IMR-90 (cell line): ENCODE measurements at regions of chr17 and their contacts with region 1.

Region 1: DNA sequence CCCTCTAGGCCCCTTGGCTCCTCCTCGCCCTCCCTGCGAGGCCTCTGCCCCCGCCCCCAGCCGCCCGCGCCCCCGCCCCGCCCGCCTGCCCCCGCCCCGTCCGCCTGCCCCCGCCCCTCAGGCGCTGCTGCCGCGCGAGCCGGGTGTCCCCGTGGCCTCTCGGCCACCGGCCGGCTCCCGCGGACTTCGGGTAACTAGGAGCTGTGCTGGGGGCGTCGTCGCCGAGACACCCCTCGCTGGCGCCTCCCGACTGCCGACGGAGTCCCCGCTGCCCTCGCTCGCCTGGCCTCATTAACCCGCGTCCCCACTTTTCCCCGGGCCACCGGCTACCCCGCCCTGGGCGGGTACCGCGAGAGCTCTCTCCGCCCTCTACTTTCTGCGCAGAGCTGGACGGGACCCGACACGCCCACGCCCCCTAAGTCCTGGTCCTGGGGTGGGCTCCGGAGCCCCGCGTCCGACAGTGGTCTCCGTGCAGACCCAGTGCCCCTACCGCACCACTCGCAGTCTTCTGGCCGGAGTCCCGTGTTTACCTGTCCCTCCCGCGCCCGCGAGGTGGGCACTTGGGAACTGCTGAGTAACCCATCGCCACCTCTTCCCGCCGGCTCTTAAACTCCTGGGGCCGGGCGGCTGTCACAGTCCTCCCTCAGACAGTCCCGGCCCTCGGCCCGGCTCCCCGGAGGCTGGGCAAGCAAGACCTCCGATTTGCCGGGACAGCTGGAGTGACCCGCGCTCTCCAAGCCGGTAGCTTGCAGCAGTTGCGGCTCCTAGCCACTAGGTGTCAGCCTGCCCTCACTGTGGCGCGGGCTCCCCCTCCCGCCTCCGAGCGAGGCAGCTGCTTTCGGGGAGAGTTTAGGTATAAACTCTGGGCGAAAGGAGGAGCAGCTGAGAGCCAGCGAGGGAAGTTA is at the start of gene TLCD1:
- DNase-seq: peak; percentile 90
- ATAC-seq: peak; percentile 63
- H3K4me3 ChIP-seq: peak within 1 kb of the TSS; percentile 72
- H3K27ac ChIP-seq: peak within 1 kb of the TSS; percentile 74
- H3K4me1 ChIP-seq: peaks cover 12% of the 10 kb centered on the region
- H3K27me3 ChIP-seq: no peaks in the 10 kb centered on the region
- CTCF ChIP-seq: peak; percentile 99
- POLR2A ChIP-seq: peak; percentile 62
- RAD21 ChIP-seq: peak; percentile 100
- total RNA-seq, gene TLCD1: 3.6 and 3.9 TPM in 2 replicates

Region 2: GRCh38 chr17:28371245-28372202 is 355.0 kb before region 1 on chr17 and contains the start of gene SARM1:
- CTCF ChIA-PET with region 1: no interaction called
- POLR2A ChIA-PET with region 1: no interaction called
- dilution Hi-C with region 1: no loop called
- in situ Hi-C with region 1: no loop called
- intact Hi-C with region 1: no loop called
- DNase-seq: peak; percentile 85
- ATAC-seq: peak; percentile 83
- H3K4me3 ChIP-seq: peak within 1 kb of the TSS; percentile 54
- H3K27ac ChIP-seq: peak within 1 kb of the TSS; percentile 93
- H3K4me1 ChIP-seq: peaks cover 14% of the 10 kb centered on the region; the same call in 1 of the 2 replicates
- H3K27me3 ChIP-seq: no peaks in the 10 kb centered on the region
- CTCF ChIP-seq: no peak
- POLR2A ChIP-seq: no peak
- RAD21 ChIP-seq: no peak
- total RNA-seq, gene SARM1: 2.5 and 3.4 TPM in 2 replicates

Region 3: GRCh38 chr17:28576758-28577465 is 149.6 kb before region 1 on chr17 and contains the start of gene ALDOC:
- CTCF ChIA-PET with region 1: no interaction called
- POLR2A ChIA-PET with region 1: no interaction called
- dilution Hi-C with region 1: no loop called
- in situ Hi-C with region 1: no loop called
- intact Hi-C with region 1: no loop called
- DNase-seq: peak; percentile 91
- ATAC-seq: peak; percentile 99
- H3K4me3 ChIP-seq: peak within 1 kb of the TSS; percentile 35
- H3K27ac ChIP-seq: no peak within 1 kb of the TSS
- H3K4me1 ChIP-seq: peaks cover 6% of the 10 kb centered on the region; the same call in 1 of the 2 replicates
- H3K27me3 ChIP-seq: no peaks in the 10 kb centered on the region
- CTCF ChIP-seq: no peak
- POLR2A ChIP-seq: peak; percentile 52; the same call in 1 of the 2 replicates
- RAD21 ChIP-seq: no peak
- total RNA-seq, gene ALDOC: 46.1 and 47.0 TPM in 2 replicates

Region 4: DNA sequence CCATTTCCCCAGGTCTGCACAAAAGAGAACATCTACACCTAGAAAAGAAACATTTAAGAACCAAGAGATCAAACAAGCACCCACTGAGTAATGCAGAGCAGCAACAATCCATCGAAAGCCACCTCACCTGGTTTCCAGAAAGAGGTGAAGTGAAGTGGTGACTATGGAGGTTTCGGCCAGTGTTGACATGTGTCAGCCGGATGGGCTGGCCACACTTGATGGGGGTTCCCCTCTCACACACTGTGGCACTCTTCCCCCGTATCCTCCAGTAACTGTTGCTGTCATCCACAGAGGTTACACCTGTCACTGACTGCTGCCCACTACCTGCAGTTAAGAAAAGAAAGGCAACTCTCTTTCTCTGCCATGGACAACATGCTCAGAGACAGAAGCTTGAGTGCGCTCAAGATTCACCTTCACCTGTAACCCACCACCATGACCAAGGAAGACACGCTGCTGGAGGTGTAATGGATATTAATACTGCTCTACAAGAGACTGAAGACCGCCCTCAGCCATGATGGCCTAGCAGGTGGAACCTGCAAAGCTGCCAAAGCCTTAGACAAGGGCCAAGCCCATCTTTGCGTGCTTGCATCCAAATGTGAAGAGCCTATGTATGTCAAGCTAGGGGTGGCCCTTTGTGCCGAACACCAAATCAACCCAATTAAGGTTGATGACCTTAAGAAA is 71.2 kb before region 1 on chr17:
- CTCF ChIA-PET with region 1: no interaction called
- POLR2A ChIA-PET with region 1: no interaction called
- dilution Hi-C with region 1: no loop called
- in situ Hi-C with region 1: no loop called
- intact Hi-C with region 1: no loop called
- DNase-seq: no peak
- ATAC-seq: no peak
- H3K4me3 ChIP-seq: no peak overlapping the region
- H3K27ac ChIP-seq: no peak overlapping the region
- H3K4me1 ChIP-seq: no peaks in the 10 kb centered on the region
- H3K27me3 ChIP-seq: no peaks in the 10 kb centered on the region
- CTCF ChIP-seq: no peak
- POLR2A ChIP-seq: no peak
- RAD21 ChIP-seq: no peak

Region 5: DNA sequence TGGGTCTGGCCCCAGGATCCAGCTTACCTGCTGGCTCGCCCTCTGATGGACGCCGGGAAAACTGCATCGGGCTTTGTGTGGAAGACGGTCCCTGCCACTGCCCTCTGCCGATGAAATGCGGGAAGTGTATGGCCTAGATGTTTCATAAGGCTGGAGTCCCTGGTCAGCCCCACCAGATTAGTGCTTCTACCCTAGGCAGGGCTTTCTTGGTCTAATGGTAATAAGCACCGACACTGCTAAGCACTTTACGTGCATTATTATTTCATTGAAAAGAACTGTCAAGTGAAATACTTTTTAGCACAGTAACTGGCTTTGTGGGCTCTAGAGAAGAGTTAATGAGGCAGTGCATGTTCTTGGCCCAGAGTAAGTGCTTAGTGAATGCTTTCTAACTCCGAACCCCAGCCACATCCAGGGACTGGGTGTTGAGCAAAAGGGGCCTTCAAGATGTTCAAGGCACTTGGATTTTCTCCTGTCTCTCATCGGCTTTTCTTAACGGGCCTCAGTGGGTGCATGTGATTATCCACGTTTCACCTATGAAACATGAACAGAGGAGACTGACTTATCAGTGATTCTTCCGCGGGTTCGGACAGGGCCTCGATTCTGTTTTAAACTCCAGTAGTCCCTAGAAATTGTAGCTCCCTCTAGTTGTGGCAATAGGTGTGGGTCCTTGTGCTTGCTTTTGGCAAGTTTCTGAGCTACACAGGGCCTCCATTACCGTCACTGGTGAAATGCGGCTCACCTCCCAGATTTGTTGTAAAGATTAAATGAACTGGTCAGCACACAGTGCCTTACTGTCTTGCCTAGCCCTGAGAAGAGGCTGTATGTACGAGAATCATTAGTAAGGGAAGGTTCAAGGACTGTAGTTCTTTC is 23.9 kb after region 1 on chr17:
- CTCF ChIA-PET with region 1: interaction called, 60 read pairs
- POLR2A ChIA-PET with region 1: interaction called, 6 read pairs
- dilution Hi-C with region 1: no loop called
- in situ Hi-C with region 1: no loop called
- intact Hi-C with region 1: loop called (anchors 1 kb)
- DNase-seq: peak; percentile 90
- ATAC-seq: peak; percentile 84
- H3K4me3 ChIP-seq: no peak overlapping the region
- H3K27ac ChIP-seq: no peak overlapping the region
- H3K4me1 ChIP-seq: peaks cover 13% of the 10 kb centered on the region
- H3K27me3 ChIP-seq: no peaks in the 10 kb centered on the region
- CTCF ChIP-seq: peak; percentile 100
- POLR2A ChIP-seq: no peak
- RAD21 ChIP-seq: peak; percentile 85

Region 6: DNA sequence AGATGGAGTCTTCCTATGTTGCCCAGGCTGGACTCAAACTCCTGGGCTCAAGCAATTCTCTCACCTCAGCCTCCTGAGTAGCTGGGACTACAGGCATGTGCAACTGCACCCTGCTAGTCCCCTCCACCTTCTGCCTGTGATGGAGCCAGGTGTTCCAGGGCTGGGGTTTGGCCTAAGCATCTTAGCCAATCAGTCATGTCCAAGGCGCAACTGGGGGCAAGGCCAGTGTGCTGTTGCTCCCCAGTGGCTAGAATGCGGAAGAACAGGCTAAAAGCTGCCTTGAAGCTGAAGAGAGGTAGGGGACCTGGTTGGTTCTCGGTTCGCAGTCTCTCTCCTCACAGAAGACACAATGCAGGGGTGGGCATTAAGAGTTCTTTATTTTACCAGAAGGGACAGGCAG is 152.5 kb after region 1 on chr17:
- CTCF ChIA-PET with region 1: interaction called, 11 read pairs
- POLR2A ChIA-PET with region 1: no interaction called
- dilution Hi-C with region 1: no loop called
- in situ Hi-C with region 1: no loop called
- intact Hi-C with region 1: no loop called
- DNase-seq: peak; percentile 32
- ATAC-seq: peak; percentile 82
- H3K4me3 ChIP-seq: no peak overlapping the region
- H3K27ac ChIP-seq: no peak overlapping the region
- H3K4me1 ChIP-seq: no peaks in the 10 kb centered on the region
- H3K27me3 ChIP-seq: no peaks in the 10 kb centered on the region
- CTCF ChIP-seq: peak; percentile 50
- POLR2A ChIP-seq: no peak
- RAD21 ChIP-seq: peak; percentile 57

Region 7: GRCh38 chr17:28908640-28909167 is 182.2 kb after region 1 on chr17:
- CTCF ChIA-PET with region 1: interaction called, 15 read pairs
- POLR2A ChIA-PET with region 1: interaction called, 7 read pairs
- dilution Hi-C with region 1: no loop called
- in situ Hi-C with region 1: no loop called
- intact Hi-C with region 1: no loop called
- DNase-seq: peak; percentile 91
- ATAC-seq: peak; percentile 90
- H3K4me3 ChIP-seq: no peak overlapping the region
- H3K27ac ChIP-seq: peak overlapping the region; percentile 87; the same call in 1 of the 2 replicates
- H3K4me1 ChIP-seq: peaks cover 20% of the 10 kb centered on the region
- H3K27me3 ChIP-seq: no peaks in the 10 kb centered on the region
- CTCF ChIP-seq: no peak
- POLR2A ChIP-seq: no peak
- RAD21 ChIP-seq: no peak

Region 8: DNA sequence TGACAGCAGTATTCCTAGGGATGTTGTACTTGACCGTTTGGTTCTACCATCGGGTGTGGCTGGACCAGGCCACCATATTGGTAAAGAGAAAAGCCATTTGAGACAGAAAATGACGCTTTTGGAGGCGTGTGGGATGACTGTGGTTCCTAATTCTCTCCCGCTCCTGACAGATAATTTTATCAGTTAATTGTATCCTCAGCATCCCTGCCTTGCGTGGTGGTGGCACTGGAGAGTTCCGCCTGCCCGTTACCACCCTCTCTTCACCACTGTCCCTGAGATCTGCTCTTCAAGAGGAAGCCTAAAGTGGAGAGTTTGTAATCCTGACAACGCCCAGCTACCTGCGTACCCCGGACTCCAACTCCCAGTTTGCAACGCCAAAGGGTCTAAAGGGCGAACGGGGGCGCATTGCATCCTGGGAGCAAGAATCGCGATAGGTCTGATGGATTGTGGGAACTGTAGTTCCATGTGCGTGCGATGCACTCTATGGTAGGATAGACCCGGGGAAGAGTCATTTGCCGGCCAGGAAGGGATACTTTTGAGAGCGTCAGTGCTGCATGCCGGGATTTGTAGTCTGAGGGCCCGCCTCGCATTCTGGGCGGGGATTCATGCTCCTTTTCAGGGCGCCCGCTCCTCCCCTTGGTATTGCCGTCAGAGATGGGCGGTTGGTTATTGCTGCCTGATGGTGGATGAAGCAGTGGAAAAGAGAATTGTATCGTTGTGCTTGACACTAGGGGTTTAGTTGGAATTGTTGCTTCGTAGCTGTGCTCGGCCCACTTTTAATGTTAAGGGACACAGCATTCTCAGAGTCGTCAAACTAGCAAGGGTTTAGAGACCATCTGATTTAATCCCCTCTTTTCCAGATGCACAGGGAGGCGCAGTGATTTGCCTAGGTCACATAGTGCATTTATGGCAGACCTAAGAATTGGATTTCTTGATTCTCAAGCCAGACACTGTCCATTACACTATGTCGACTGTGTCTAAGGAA is 225.8 kb after region 1 on chr17:
- CTCF ChIA-PET with region 1: interaction called, 27 read pairs
- POLR2A ChIA-PET with region 1: interaction called, 6 read pairs
- dilution Hi-C with region 1: no loop called
- in situ Hi-C with region 1: no loop called
- intact Hi-C with region 1: loop called (anchors 2 kb)
- DNase-seq: peak; percentile 99
- ATAC-seq: peak; percentile 69
- H3K4me3 ChIP-seq: peak overlapping the region; percentile 51
- H3K27ac ChIP-seq: peak overlapping the region; percentile 82
- H3K4me1 ChIP-seq: no peaks in the 10 kb centered on the region
- H3K27me3 ChIP-seq: no peaks in the 10 kb centered on the region
- CTCF ChIP-seq: no peak
- POLR2A ChIP-seq: no peak
- RAD21 ChIP-seq: no peak

Region 9: GRCh38 chr17:29116804-29117772 is 390.6 kb after region 1 on chr17:
- CTCF ChIA-PET with region 1: interaction called, 15 read pairs
- POLR2A ChIA-PET with region 1: no interaction called
- dilution Hi-C with region 1: no loop called
- in situ Hi-C with region 1: no loop called
- intact Hi-C with region 1: loop called (anchors 2 kb)
- DNase-seq: peak; percentile 47
- ATAC-seq: peak; percentile 78
- H3K4me3 ChIP-seq: no peak overlapping the region
- H3K27ac ChIP-seq: no peak overlapping the region
- H3K4me1 ChIP-seq: no peaks in the 10 kb centered on the region
- H3K27me3 ChIP-seq: no peaks in the 10 kb centered on the region
- CTCF ChIP-seq: peak; percentile 77
- POLR2A ChIP-seq: no peak
- RAD21 ChIP-seq: peak; percentile 70